Activated T-helper 1 cell treated with anti-CD3 and anti-CD28 coated beads, Interleukin-12 subunit alpha, Interleukin-12 subunit beta, Interleukin-2, Interleukin-4 antibody, amounts not matched to agents 30 ng/mL and 10 ng/mL and 1 ng/mL, durations not matched to agents 14 hours and 24 hours and 36 hours (primary cell): ENCODE measurements at regions of chr17 and their contacts with region 1.

Region 1: DNA sequence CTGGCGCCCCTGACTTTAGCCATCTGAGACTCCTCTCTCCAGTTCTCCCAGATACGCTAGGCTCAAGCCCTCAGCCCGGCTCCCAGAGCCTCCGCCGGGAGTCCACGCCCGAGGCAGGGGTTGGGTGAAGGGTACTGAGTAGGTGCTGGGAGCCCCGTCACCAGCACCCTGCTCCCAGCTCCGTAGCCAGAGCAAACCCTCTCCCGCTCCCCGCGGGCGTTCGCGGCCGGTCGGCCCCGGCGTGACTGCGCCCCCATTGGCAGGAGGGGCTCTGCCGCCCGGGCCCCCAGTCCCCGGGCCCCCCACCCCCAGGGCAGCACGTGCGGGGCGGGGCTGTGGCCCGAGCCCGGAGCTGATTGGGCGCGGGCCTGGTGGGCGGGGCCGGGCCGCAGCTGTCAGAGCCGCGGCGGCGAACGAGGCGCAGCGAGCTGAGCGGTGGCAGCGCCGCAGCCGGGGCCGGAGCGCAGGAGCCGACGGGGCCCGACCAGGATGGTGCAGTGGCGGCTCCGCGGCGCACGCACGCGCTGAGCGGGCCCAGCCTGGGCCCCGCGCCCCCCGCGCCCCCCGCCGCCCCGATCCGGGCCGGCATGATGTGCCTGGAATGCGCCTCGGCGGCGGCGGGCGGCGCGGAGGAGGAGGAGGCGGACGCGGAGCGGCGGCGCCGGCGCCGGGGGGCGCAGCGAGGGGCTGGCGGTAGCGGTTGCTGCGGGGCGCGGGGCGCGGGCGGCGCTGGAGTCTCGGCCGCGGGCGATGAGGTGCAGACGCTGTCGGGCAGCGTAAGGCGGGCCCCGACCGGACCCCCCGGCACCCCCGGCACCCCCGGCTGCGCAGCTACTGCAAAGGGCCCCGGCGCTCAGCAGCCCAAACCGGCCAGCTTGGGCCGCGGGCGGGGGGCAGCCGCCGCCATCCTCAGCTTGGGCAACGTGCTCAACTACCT is at the start of gene SPNS2:
- DNase-seq: peak; percentile 61
- H3K4me3 Mint-ChIP-seq: peak within 1 kb of the TSS; percentile 72
- H3K27ac Mint-ChIP-seq: no peak within 1 kb of the TSS
- H3K4me1 Mint-ChIP-seq: peaks cover 8% of the 10 kb centered on the region
- H3K27me3 Mint-ChIP-seq: peaks cover 47% of the 10 kb centered on the region
- total RNA-seq, gene SPNS2: 0.17 TPM in 1 of 2 replicates, not detected in the other

Region 2: GRCh38 chr17:4480929-4481898 is 17.5 kb before region 1 on chr17:
- intact Hi-C with region 1: loop called (anchors 1 kb)
- DNase-seq: peak; percentile 43
- H3K4me3 Mint-ChIP-seq: peak overlapping the region; percentile 54
- H3K27ac Mint-ChIP-seq: peak overlapping the region; percentile 95
- H3K4me1 Mint-ChIP-seq: peaks cover 26% of the 10 kb centered on the region
- H3K27me3 Mint-ChIP-seq: peaks cover 2% of the 10 kb centered on the region

Region 3: GRCh38 chr17:4509401-4509800 is 10.7 kb after region 1 on chr17:
- intact Hi-C with region 1: loop called (anchors 1 kb)
- DNase-seq: no peak
- H3K4me3 Mint-ChIP-seq: no peak overlapping the region
- H3K27ac Mint-ChIP-seq: peak overlapping the region; percentile 62
- H3K4me1 Mint-ChIP-seq: peaks cover 33% of the 10 kb centered on the region
- H3K27me3 Mint-ChIP-seq: peaks cover 6% of the 10 kb centered on the region

Region 4: GRCh38 chr17:4554997-4555799 is 56.5 kb after region 1 on chr17 and contains the start of gene MYBBP1A:
- intact Hi-C with region 1: no loop called
- DNase-seq: peak; percentile 96
- H3K4me3 Mint-ChIP-seq: peak within 1 kb of the TSS; percentile 94
- H3K27ac Mint-ChIP-seq: peak within 1 kb of the TSS; percentile 93
- H3K4me1 Mint-ChIP-seq: peaks cover 29% of the 10 kb centered on the region
- H3K27me3 Mint-ChIP-seq: no peaks in the 10 kb centered on the region
- total RNA-seq, gene MYBBP1A: 186 and 195 TPM in 2 replicates